ENCODE measurements at regions of chr13 and their contacts with region 1.

Region 1: DNA sequence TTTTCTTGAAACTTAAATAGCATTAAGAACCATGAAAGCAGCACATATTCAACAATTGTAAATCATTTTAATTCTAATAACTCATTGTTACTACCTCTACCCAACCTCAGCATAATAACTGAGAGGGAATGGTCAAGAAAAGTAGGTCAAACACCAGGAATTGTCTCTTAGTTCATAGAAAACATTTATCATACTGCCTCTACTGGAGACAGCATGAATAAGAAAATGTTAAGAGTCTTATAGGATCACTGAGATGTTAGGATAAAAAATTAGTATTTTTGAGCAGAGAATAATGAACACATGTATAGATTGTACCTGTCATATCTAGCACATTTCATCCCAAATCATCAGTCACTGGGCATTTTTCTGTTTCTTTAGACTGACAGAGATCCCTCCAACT is 515.3 kb downstream of the PCDH9 start:
- DNase-seq: no peak
- H3K4me3 ChIP-seq: no peak overlapping the region
- H3K27ac ChIP-seq: no peak overlapping the region
- H3K4me1 ChIP-seq: no peaks in the 10 kb centered on the region
- CTCF ChIP-seq: peak; percentile 69

Region 2: DNA sequence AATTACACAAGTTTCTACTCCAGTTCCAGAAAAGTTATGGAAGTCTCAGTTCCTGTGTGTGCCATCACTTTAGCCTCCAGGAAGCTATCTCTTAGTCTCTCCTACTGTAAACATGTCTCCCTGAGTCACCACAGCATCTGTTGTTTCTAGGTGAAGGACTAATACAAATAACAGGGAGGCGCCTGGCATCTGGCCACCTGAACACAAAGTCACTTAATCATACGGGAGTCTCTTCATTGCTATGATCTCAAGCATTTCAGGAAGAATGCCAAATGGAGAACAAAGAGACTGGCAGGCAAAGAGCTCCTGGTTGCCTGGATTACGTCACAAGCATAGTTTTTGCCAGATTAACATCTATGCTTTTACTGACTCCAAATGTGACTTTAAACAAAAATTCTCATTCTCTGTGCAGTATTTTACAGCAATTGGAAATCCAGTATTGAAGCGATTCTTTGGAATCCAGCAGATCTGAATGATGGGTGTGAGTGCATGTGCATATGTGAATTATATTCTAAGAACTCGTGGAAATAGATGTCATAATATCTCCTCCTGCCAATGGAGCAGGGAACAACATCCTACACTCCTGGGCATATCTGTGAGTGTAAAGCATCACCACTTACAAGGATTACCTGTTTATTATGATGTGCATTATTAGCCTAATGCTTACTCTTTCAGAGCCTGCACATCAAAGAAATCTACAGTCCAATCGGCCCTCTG is 57.5 kb before region 1 on chr13:
- CTCF ChIA-PET with region 1: no interaction called
- POLR2A ChIA-PET with region 1: no interaction called
- intact Hi-C with region 1: no loop called
- DNase-seq: no peak
- H3K4me3 ChIP-seq: peak overlapping the region; percentile 10
- H3K27ac ChIP-seq: peak overlapping the region; percentile 96
- H3K4me1 ChIP-seq: peaks cover 58% of the 10 kb centered on the region
- CTCF ChIP-seq: no peak

Region 3: GRCh38 chr13:66703597-66703996 is 11.2 kb before region 1 on chr13:
- CTCF ChIA-PET with region 1: no interaction called
- POLR2A ChIA-PET with region 1: interaction called, 12 read pairs
- intact Hi-C with region 1: no loop called
- DNase-seq: no peak
- H3K4me3 ChIP-seq: no peak overlapping the region
- H3K27ac ChIP-seq: no peak overlapping the region
- H3K4me1 ChIP-seq: no peaks in the 10 kb centered on the region
- CTCF ChIP-seq: no peak

Measured in OCI-LY7 (cell line).